K562 (cell line): ENCODE measurements at regions of chr6 and their contacts with region 1.

Region 1: GRCh38 chr6:11585426-11586016 is 48.0 kb downstream of the TMEM170B start:
- DNase-seq: peak; percentile 21 to 64 (median 39)
- ATAC-seq: peak; percentile 75
- H3K4me3 ChIP-seq: no peak overlapping the region
- H3K27ac ChIP-seq: no peak overlapping the region
- H3K4me1 ChIP-seq: no peaks in the 10 kb centered on the region
- H3K27me3 ChIP-seq: peaks cover 4 to 16% of the 10 kb centered on the region in 2 experiments; a peak in 3 of 5 replicates
- CTCF ChIP-seq: peak; percentile 49 to 83 (median 62); a peak in 5 of 6 replicates
- EP300 ChIP-seq: no peak
- POLR2A ChIP-seq: no peak
- RAD21 ChIP-seq: peak; percentile 85 to 88

Region 2: DNA sequence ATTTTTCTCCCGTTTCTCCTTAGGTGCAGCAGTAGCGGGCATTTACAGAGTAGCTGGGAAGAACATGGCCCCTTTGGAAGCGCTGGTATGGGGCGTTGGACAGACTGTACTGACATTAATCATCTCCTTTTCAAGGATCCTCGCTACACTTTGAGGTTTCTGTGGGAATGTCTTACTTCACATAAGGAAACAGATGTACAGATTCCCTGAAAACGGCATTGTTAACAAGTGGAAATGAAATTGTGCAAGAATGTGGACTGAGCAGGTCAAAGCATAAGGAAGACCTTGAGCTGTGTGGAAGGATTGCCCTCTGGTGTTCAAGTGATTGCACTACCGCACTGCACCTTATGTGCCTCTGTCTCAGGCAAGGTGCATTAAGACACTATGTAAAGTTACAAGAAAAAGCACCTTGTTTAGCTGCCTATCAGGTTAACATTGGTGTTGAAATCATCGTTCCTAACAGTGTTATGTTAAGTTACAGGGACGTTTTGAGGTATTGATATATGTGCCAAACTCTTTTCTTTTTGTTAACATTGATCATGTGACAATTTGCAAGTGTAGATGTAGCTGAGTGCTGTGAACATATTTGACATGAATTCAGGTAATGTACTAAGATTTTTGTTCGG is 10.0 kb before region 1 on chr6:
- CTCF ChIA-PET with region 1: no interaction called
- POLR2A ChIA-PET with region 1: no interaction called
- in situ Hi-C with region 1: no loop called
- intact Hi-C with region 1: no loop called
- DNase-seq: peak; percentile 63 to 80 (median 68)
- ATAC-seq: peak; percentile 100
- H3K4me3 ChIP-seq: no peak overlapping the region
- H3K27ac ChIP-seq: no peak overlapping the region
- H3K4me1 ChIP-seq: no peaks in the 10 kb centered on the region
- H3K27me3 ChIP-seq: peaks cover 2 to 3% of the 10 kb centered on the region in 2 experiments; a peak in 1 of 5 replicates
- CTCF ChIP-seq: peak; percentile 85 to 95 (median 93)
- EP300 ChIP-seq: no peak
- POLR2A ChIP-seq: no peak
- RAD21 ChIP-seq: peak; percentile 94 to 95

Region 3: GRCh38 chr6:12233693-12234571 is 648.4 kb after region 1 on chr6:
- CTCF ChIA-PET with region 1: no interaction called
- POLR2A ChIA-PET with region 1: no interaction called
- in situ Hi-C with region 1: no loop called
- intact Hi-C with region 1: loop called (anchors 1 kb)
- DNase-seq: peak in 3 of 4 experiments; percentile 18 to 54 (median 23)
- ATAC-seq: peak; percentile 84
- H3K4me3 ChIP-seq: no peak overlapping the region
- H3K27ac ChIP-seq: no peak overlapping the region
- H3K4me1 ChIP-seq: no peaks in the 10 kb centered on the region
- H3K27me3 ChIP-seq: peaks cover 2 to 5% of the 10 kb centered on the region in 2 experiments
- CTCF ChIP-seq: peak; percentile 63 to 96 (median 96)
- EP300 ChIP-seq: no peak
- POLR2A ChIP-seq: no peak
- RAD21 ChIP-seq: peak; percentile 76 to 83

Region 4: GRCh38 chr6:12289933-12290820 is 704.7 kb after region 1 on chr6 and contains the start of gene EDN1:
- CTCF ChIA-PET with region 1: interaction called, 7 read pairs
- POLR2A ChIA-PET with region 1: interaction called, 3 read pairs
- in situ Hi-C with region 1: no loop called
- intact Hi-C with region 1: loop called (anchors 2 kb)
- DNase-seq: peak; percentile 24 to 47 (median 32)
- ATAC-seq: peak; percentile 87
- H3K4me3 ChIP-seq: no peak within 1 kb of the TSS
- H3K27ac ChIP-seq: no peak within 1 kb of the TSS
- H3K4me1 ChIP-seq: peaks cover 0 to 10% of the 10 kb centered on the region in 2 experiments; a peak in 2 of 5 replicates
- H3K27me3 ChIP-seq: peaks cover 24 to 37% of the 10 kb centered on the region in 2 experiments
- CTCF ChIP-seq: peak in 2 of 3 experiments; percentile 24 to 40; a peak in 2 of 6 replicates
- EP300 ChIP-seq: no peak
- POLR2A ChIP-seq: no peak
- RAD21 ChIP-seq: 0 out of 4 replicates have a peak, but pooled peaks of 1 of the 2 experiments have one; percentile 19
- polyA plus RNA-seq, gene EDN1: not detected

Region 5: GRCh38 chr6:12504319-12504966 is 918.9 kb after region 1 on chr6:
- CTCF ChIA-PET with region 1: no interaction called
- POLR2A ChIA-PET with region 1: interaction called, 3 read pairs
- in situ Hi-C with region 1: no loop called
- intact Hi-C with region 1: loop called (anchors 10 kb)
- DNase-seq: peak; percentile 39 to 46 (median 44)
- ATAC-seq: peak; percentile 92
- H3K4me3 ChIP-seq: no peak overlapping the region
- H3K27ac ChIP-seq: no peak overlapping the region
- H3K4me1 ChIP-seq: no peaks in the 10 kb centered on the region
- H3K27me3 ChIP-seq: no peaks in the 10 kb centered on the region
- CTCF ChIP-seq: peak; percentile 54 to 66 (median 56); a peak in 5 of 6 replicates
- EP300 ChIP-seq: no peak
- POLR2A ChIP-seq: no peak
- RAD21 ChIP-seq: peak; percentile 16 to 55; a peak in 2 of 4 replicates

Region 6: GRCh38 chr6:12605888-12606345 is 1020.4 kb after region 1 on chr6:
- CTCF ChIA-PET with region 1: interaction called, 17 read pairs
- POLR2A ChIA-PET with region 1: no interaction called
- in situ Hi-C with region 1: loop called (anchors 10 kb)
- intact Hi-C with region 1: loop called (anchors 1 kb)
- DNase-seq: peak; percentile 34 to 75 (median 45)
- ATAC-seq: peak; percentile 99
- H3K4me3 ChIP-seq: no peak overlapping the region
- H3K27ac ChIP-seq: no peak overlapping the region
- H3K4me1 ChIP-seq: no peaks in the 10 kb centered on the region
- H3K27me3 ChIP-seq: no peaks in the 10 kb centered on the region
- CTCF ChIP-seq: peak; percentile 73 to 83 (median 80)
- EP300 ChIP-seq: no peak
- POLR2A ChIP-seq: no peak
- RAD21 ChIP-seq: peak; percentile 82 to 83

Region 7: GRCh38 chr6:12890171-12890790 is 1304.8 kb after region 1 on chr6:
- CTCF ChIA-PET with region 1: no interaction called
- POLR2A ChIA-PET with region 1: no interaction called
- in situ Hi-C with region 1: loop called (anchors 10 kb)
- intact Hi-C with region 1: loop called (anchors 5 kb)
- DNase-seq: peak; percentile 40 to 62 (median 56)
- ATAC-seq: peak; percentile 85
- H3K4me3 ChIP-seq: no peak overlapping the region
- H3K27ac ChIP-seq: no peak overlapping the region
- H3K4me1 ChIP-seq: no peaks in the 10 kb centered on the region
- H3K27me3 ChIP-seq: no peaks in the 10 kb centered on the region
- CTCF ChIP-seq: peak; percentile 70 to 77 (median 71)
- EP300 ChIP-seq: no peak
- POLR2A ChIP-seq: no peak
- RAD21 ChIP-seq: peak in 1 of 2 experiments; percentile 20; a peak in 1 of 4 replicates